ENCODE measurements at regions of chr12 and their contacts with region 1.

Region 1: GRCh38 chr12:47837190-47838171 is 17.8 kb upstream of the HDAC7 start:
- DNase-seq: peak; percentile 77 to 78
- ATAC-seq: peak; percentile 75 to 90 (median 78)
- H3K4me3 ChIP-seq: no peak overlapping the region
- H3K27ac ChIP-seq: no peak overlapping the region
- H3K4me1 ChIP-seq: peaks cover 29% of the 10 kb centered on the region
- H3K27me3 ChIP-seq: no peaks in the 10 kb centered on the region
- CTCF ChIP-seq: peak; percentile 97

Region 2: DNA sequence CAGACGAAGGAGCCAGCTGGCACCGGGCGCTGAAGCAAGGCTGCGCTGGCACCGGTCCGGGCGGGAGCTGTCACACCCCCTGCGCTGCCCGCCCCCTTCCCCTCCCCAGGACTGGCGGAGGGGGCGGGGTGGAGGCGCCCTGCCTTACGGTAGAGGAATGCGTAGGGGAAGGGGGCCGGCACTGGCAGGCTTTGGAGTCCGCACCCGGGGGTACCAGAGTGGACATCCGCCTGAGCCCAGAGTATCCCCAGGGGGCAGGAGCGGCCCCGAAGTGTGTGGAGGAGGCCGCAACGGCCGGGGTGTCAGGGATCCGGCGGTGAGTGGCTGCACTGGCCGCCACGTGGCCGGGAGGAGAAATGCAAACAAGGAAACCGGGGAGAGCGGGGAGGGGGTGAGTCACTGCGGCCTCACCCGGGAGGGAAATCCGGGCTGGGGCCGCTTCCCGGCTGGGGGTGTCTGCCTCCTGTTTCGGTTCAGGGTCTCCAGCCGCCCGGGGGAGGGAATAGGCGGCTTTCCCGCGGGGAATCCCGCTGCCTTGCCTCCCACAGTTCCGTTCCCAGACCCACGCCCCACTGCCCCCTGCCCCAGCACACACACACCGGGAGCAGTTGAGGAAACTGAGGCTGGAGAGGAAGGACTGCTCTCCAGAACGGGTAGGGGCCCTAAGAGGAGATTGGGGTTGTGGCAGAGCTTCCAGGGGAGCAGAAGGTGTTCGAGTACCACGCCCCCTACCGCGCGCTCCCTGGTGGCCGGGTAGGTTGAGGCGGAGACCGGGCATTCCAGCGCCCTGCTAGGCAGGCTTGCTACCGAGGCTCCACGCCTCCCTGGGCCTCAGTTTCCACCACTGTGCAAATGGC is 78.4 kb before region 1 on chr12 and contains the start of gene RAPGEF3:
- intact Hi-C with region 1: no loop called
- DNase-seq: peak; percentile 87 to 91
- ATAC-seq: peak; percentile 91 to 96 (median 92)
- H3K4me3 ChIP-seq: peak within 1 kb of the TSS; percentile 72
- H3K27ac ChIP-seq: peak within 1 kb of the TSS; percentile 57
- H3K4me1 ChIP-seq: peaks cover 18% of the 10 kb centered on the region
- H3K27me3 ChIP-seq: no peaks in the 10 kb centered on the region
- CTCF ChIP-seq: peak; percentile 44
- total RNA-seq, gene RAPGEF3: 5.1 to 28.8 (median 11.7) TPM

Region 3: DNA sequence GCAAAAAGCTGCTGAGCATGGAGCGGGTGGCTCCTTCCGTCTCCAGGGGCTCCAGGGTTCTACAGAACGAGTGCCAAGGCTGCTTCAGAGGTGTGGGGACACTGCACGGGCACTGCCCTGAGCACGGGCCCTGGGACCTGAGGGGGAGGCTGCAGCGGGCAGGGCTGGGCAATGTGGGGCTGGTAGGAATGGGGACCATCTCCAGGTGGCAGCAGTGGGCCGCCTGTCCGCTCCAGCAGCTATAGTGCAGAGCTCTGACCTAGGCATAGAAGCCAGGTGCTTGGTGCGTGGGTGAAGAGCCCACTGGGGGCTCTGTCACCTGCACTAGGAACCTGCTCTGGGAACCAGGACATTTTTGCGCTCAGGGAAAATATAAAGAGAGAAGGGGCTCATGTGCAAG is 40.0 kb before region 1 on chr12:
- intact Hi-C with region 1: loop called (anchors 1 to 2 kb)
- DNase-seq: no peak
- ATAC-seq: peak; percentile 55 to 63 (median 60)
- H3K4me3 ChIP-seq: no peak overlapping the region
- H3K27ac ChIP-seq: no peak overlapping the region
- H3K4me1 ChIP-seq: peaks cover 53% of the 10 kb centered on the region
- H3K27me3 ChIP-seq: no peaks in the 10 kb centered on the region
- CTCF ChIP-seq: peak; percentile 62